PC-3 (cell line): ENCODE measurements at regions of chr4 and their contacts with region 1.

Region 1: DNA sequence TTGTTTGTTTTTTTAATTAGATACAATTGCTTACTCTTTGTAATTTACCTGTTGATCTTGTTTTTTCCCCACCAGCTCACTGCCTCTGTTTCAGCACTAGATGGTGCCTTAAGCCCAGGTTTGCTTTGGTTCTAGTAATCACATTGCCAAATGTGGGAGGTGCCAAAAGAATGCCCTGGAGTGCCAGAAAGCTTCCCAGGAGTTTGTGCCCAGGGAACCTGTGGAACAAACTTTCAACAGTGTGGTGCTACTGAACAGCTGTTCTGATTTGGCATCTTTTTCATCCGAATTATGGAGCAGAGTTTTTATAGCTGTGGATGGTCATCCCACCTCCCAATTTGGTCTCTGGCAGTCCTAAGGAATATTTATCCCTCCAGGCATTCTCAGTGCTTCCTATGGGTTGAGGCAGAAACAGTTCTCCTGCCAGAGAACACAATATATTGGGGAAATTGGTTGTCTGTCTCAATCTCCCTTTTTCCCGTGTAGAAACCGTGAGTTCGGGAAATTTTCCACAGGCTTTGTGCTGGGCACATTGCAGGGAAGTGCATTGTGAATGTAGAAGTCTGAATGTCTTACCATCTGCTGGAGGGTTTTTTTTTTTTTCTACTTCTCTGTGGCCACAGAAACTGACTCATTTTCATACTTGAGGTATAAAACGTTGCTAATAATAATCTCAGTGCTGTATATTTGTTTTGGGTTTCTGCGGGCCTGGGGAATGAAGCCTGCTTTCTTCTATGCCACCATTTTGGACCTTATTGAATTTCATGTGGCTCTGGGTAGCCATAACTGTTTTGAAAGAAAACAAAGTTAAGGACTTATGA is 1001.0 kb downstream of the STIM2 start:
- DNase-seq: peak; percentile 79
- ATAC-seq: peak; percentile 72
- H3K4me3 ChIP-seq: no peak overlapping the region
- H3K27ac ChIP-seq: peak overlapping the region; percentile 44
- H3K4me1 ChIP-seq: peaks cover 8% of the 10 kb centered on the region; the same call in 1 of the 2 replicates
- H3K27me3 ChIP-seq: no peaks in the 10 kb centered on the region
- CTCF ChIP-seq: peak; percentile 84

Region 2: DNA sequence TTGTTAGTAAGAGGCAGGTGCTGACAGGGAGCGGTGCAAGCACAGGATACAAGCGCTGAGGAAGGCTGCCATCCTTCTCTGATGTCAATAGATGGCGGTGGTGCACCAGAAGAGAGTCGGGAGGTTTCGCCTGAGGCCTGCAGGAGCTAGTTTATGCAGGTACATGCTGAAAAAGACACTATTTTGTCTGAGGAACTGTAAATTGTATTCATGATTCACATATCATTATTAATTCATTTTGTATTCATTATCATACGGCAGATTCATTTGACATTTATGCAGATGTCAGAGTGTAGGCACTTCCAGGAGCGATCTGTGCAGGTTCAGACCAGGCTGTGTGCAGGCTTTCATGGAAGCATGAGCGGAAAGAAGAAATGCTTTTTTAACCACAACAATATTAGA is 177.0 kb before region 1 on chr4:
- CTCF ChIA-PET with region 1: interaction called, 5 read pairs
- POLR2A ChIA-PET with region 1: no interaction called
- intact Hi-C with region 1: loop called (anchors 5 kb)
- DNase-seq: peak; percentile 71
- ATAC-seq: peak; percentile 92
- H3K4me3 ChIP-seq: no peak overlapping the region
- H3K27ac ChIP-seq: no peak overlapping the region
- H3K4me1 ChIP-seq: no peaks in the 10 kb centered on the region
- H3K27me3 ChIP-seq: no peaks in the 10 kb centered on the region
- CTCF ChIP-seq: peak; percentile 78

Region 3: GRCh38 chr4:28073860-28074555 is 212.4 kb after region 1 on chr4:
- CTCF ChIA-PET with region 1: interaction called, 5 read pairs
- POLR2A ChIA-PET with region 1: no interaction called
- intact Hi-C with region 1: loop called (anchors 5 kb)
- DNase-seq: peak; percentile 7
- ATAC-seq: no peak
- H3K4me3 ChIP-seq: no peak overlapping the region
- H3K27ac ChIP-seq: no peak overlapping the region
- H3K4me1 ChIP-seq: no peaks in the 10 kb centered on the region
- H3K27me3 ChIP-seq: no peaks in the 10 kb centered on the region
- CTCF ChIP-seq: no peak; the same call in 1 of the 2 replicates

Region 4: GRCh38 chr4:28350485-28350884 is 488.9 kb after region 1 on chr4:
- CTCF ChIA-PET with region 1: no interaction called
- POLR2A ChIA-PET with region 1: no interaction called
- intact Hi-C with region 1: loop called (anchors 5 kb)
- DNase-seq: peak; percentile 43
- ATAC-seq: peak; percentile 73
- H3K4me3 ChIP-seq: no peak overlapping the region
- H3K27ac ChIP-seq: no peak overlapping the region
- H3K4me1 ChIP-seq: no peaks in the 10 kb centered on the region
- H3K27me3 ChIP-seq: no peaks in the 10 kb centered on the region
- CTCF ChIP-seq: no peak

Region 5: DNA sequence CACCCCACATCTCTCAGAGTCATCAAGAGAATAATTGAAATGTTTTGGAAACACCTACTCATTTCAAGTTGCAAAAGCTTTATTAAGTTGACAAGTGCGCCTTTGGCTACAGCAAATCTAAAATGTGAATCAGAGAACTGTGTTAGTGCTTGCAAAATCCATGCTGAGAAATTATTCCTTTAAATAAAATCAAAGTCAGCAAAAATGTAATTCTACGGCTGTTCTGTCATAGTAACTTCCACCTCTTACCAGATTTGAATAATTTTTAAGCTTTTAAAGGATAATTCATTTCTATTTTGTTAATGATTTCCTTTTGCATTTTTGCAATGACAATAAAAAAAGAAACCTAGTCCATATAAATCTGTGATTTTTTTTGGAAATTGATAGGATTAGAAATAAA is 778.2 kb after region 1 on chr4:
- CTCF ChIA-PET with region 1: no interaction called
- POLR2A ChIA-PET with region 1: no interaction called
- intact Hi-C with region 1: no loop called
- DNase-seq: no peak
- ATAC-seq: no peak
- H3K4me3 ChIP-seq: no peak overlapping the region
- H3K27ac ChIP-seq: no peak overlapping the region
- H3K4me1 ChIP-seq: no peaks in the 10 kb centered on the region
- H3K27me3 ChIP-seq: no peaks in the 10 kb centered on the region
- CTCF ChIP-seq: no peak

Region 6: GRCh38 chr4:29131304-29131703 is 1269.7 kb after region 1 on chr4:
- CTCF ChIA-PET with region 1: interaction called, 3 read pairs
- POLR2A ChIA-PET with region 1: no interaction called
- intact Hi-C with region 1: loop called (anchors 5 kb)
- DNase-seq: peak; percentile 6
- ATAC-seq: no peak
- H3K4me3 ChIP-seq: no peak overlapping the region
- H3K27ac ChIP-seq: no peak overlapping the region
- H3K4me1 ChIP-seq: no peaks in the 10 kb centered on the region
- H3K27me3 ChIP-seq: no peaks in the 10 kb centered on the region
- CTCF ChIP-seq: peak; percentile 35; the same call in 1 of the 2 replicates